GM23248 (cell line): ENCODE measurements at regions of chr6 and their contacts with region 1.

Region 1: DNA sequence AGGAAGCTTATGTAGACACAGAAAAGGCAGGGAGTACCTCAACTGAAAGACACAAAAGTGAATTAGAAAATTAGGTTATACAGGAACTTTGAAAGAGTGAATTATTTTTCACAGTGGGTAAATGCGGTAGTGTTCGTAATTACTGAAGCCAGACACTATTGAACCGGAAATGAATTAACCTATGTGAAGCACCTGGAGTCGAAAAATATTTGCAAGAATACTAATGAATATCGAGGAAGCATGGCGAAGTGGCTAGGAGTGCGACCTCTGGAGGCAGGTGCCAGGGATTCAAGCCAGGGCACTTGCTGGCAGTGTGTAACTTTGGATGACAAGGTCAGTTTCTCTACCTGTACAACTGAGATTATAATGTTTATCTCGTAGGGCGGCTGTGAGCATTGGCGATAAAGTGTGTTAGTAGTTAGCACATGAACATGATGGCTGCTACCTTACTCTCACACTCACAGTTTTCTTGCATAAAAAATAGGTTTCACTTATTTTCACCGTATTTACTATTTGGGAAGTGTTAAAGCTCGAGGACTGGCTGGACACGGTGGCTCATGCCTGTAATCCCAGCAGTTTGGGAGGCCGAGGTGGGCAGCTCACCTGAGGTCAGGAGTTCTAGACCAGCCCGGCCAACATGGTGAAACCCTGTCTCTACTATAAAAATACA is 567 bp upstream of the SLC18B1 start:
- DNase-seq: peak; percentile 80
- H3K4me3 ChIP-seq: peak overlapping the region; percentile 80
- H3K27ac ChIP-seq: peak overlapping the region; percentile 32; the same call in 1 of the 2 replicates
- H3K4me1 ChIP-seq: peaks cover 4% of the 10 kb centered on the region; the same call in 1 of the 2 replicates
- H3K27me3 ChIP-seq: no peaks in the 10 kb centered on the region

Region 2: DNA sequence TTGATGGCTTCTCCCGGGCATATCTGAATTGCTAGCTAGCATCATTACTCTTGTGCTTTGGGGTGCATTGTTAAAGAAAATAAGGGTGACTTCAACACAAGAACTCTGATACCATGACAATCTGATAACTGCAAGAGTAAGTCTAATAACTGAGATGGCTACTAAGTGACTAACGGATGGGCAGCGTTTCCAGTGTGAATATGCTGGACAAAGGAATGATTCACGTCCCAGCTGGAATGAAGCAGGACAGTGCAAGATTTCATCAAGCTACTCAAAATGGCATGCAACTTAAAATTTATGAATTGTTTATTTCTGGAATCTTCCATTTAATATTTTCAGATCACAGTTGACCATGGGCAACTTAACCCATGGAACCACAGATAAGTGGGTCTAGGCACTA is 429.5 kb before region 1 on chr6:
- in situ Hi-C with region 1: no loop called
- DNase-seq: peak; percentile 95
- H3K4me3 ChIP-seq: peak overlapping the region; percentile 51
- H3K27ac ChIP-seq: peak overlapping the region; percentile 88
- H3K4me1 ChIP-seq: peaks cover 38% of the 10 kb centered on the region
- H3K27me3 ChIP-seq: no peaks in the 10 kb centered on the region

Region 3: GRCh38 chr6:132530293-132530974 is 268.6 kb before region 1 on chr6:
- in situ Hi-C with region 1: loop called (anchors 25 kb)
- DNase-seq: peak; percentile 67
- H3K4me3 ChIP-seq: peak overlapping the region; percentile 41; the same call in 1 of the 2 replicates
- H3K27ac ChIP-seq: no peak overlapping the region
- H3K4me1 ChIP-seq: no peaks in the 10 kb centered on the region
- H3K27me3 ChIP-seq: no peaks in the 10 kb centered on the region

Region 4: DNA sequence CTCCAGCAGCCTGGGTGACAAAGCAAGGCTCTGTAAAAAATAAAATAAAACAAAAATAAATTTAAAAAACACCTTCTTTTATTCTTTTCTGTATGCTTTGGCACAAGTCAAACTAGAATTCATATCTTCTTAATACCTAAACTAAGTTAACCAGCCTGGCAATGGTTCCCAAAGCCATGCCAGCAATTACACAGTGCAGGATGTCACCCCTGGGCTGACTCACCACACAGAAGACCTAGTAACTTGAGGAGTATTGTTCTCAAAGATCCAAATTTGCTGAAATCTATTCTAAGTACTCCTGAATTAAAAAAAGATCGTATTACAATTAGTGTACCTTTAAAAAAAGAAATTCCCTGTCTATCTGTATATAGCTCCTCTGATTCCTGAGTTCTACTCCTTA is 1681.6 kb after region 1 on chr6:
- in situ Hi-C with region 1: no loop called
- DNase-seq: peak; percentile 66
- H3K4me3 ChIP-seq: no peak overlapping the region
- H3K27ac ChIP-seq: no peak overlapping the region
- H3K4me1 ChIP-seq: peaks cover 11% of the 10 kb centered on the region
- H3K27me3 ChIP-seq: no peaks in the 10 kb centered on the region